IMR-90 (cell line): ENCODE measurements at regions of chr1 and their contacts with region 1.

Region 1: GRCh38 chr1:37574834-37575480 is 18.2 kb downstream of the DNALI1 start:
- DNase-seq: peak; percentile 91
- ATAC-seq: peak; percentile 75
- H3K4me3 ChIP-seq: no peak overlapping the region
- H3K27ac ChIP-seq: peak overlapping the region; percentile 71
- H3K4me1 ChIP-seq: peaks cover 14% of the 10 kb centered on the region
- H3K27me3 ChIP-seq: no peaks in the 10 kb centered on the region
- CTCF ChIP-seq: no peak
- POLR2A ChIP-seq: peak; percentile 69
- RAD21 ChIP-seq: no peak

Region 2: DNA sequence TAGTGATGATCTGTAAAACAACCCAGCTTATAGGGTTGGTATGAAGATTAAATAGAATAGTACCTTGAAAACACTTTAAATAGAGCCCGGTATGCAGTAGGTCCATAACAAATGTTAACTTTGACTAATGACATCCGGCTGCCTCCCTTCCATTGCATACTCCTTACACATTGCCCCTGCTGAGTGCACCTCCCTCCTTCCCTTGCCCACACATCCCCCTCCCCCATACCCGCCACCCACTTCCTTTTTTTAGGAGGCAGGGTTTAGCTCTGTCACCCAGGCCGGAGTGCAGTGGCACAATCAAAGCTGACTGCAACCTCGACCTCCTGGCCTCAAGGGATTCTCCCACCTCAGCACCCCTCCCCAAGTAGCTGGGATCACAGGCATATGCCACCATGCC is 125.0 kb before region 1 on chr1:
- CTCF ChIA-PET with region 1: no interaction called
- POLR2A ChIA-PET with region 1: no interaction called
- dilution Hi-C with region 1: no loop called
- in situ Hi-C with region 1: no loop called
- intact Hi-C with region 1: loop called (anchors 10 kb)
- DNase-seq: no peak
- ATAC-seq: no peak
- H3K4me3 ChIP-seq: no peak overlapping the region
- H3K27ac ChIP-seq: no peak overlapping the region
- H3K4me1 ChIP-seq: peaks cover under 1% of the 10 kb centered on the region
- H3K27me3 ChIP-seq: peaks cover 15% of the 10 kb centered on the region
- CTCF ChIP-seq: no peak
- POLR2A ChIP-seq: no peak
- RAD21 ChIP-seq: no peak